T-cell (primary cell): ENCODE measurements at regions of chr1 and their contacts with region 1.

Region 1: GRCh38 chr1:78132174-78132947 is 86.6 kb downstream of the GIPC2 start:
- DNase-seq: no peak
- ATAC-seq: no peak
- H3K4me3 ChIP-seq: no peak overlapping the region
- H3K4me3 Mint-ChIP-seq: no peak overlapping the region
- H3K27ac ChIP-seq: no peak overlapping the region
- H3K27ac Mint-ChIP-seq: no peak overlapping the region
- H3K4me1 ChIP-seq: no peaks in the 10 kb centered on the region
- H3K4me1 Mint-ChIP-seq: no peaks in the 10 kb centered on the region
- H3K27me3 ChIP-seq: no peaks in the 10 kb centered on the region
- H3K27me3 Mint-ChIP-seq: no peaks in the 10 kb centered on the region

Region 2: DNA sequence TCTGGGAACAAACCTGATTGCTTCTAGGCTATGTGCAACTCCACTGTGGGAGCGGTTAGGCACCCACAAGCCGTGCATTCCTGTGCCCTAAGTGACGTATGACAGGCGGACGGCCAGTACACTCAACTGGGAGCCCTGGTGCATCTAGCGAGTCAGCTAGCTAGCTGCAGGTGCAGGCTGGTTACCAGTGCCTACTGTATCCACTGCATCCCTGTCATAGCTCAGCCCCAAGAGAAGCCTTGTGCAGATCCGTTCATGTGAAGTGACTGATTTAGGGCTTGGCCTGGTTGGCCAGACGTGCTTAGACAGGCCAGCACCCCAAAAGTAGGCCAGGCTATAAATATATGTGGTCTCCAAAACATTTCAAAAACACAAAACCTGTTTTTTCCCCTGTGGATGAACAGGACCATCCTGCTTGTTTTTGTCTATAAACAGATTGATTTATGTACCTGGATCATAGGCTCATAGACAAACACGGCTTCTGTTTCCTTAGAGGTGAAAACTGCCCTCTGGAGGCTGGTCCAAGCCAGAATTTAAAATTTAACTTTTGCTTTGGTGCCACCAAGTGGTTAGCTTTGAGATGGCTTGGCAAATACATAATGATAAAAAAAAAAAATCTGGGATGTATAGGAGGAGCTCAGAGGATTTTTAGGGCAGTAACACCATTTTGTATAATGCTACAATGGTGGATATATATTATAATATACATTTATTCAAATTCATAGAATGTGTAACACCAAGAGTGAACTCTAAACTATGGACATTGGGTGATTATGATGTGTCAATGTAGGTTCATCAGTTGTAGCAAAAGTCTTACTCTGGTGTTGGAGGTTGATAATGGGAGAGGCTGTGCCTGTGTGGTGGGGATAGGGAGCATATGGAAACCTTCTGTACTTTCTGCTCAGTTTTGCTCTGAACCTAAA is 18.1 kb before region 1 on chr1:
- CTCF ChIA-PET with region 1: interaction called in 1 of 2 experiments, 11 read pairs
- POLR2A ChIA-PET with region 1: no interaction called
- DNase-seq: peak; percentile 3 to 77 (median 41)
- ATAC-seq: peak; percentile 79 to 90 (median 84)
- H3K4me3 ChIP-seq: no peak overlapping the region
- H3K4me3 Mint-ChIP-seq: no peak overlapping the region
- H3K27ac ChIP-seq: no peak overlapping the region
- H3K27ac Mint-ChIP-seq: no peak overlapping the region
- H3K4me1 ChIP-seq: no peaks in the 10 kb centered on the region
- H3K4me1 Mint-ChIP-seq: no peaks in the 10 kb centered on the region
- H3K27me3 ChIP-seq: no peaks in the 10 kb centered on the region
- H3K27me3 Mint-ChIP-seq: peaks cover 0 to 3% of the 10 kb centered on the region in 2 donors

Region 3: DNA sequence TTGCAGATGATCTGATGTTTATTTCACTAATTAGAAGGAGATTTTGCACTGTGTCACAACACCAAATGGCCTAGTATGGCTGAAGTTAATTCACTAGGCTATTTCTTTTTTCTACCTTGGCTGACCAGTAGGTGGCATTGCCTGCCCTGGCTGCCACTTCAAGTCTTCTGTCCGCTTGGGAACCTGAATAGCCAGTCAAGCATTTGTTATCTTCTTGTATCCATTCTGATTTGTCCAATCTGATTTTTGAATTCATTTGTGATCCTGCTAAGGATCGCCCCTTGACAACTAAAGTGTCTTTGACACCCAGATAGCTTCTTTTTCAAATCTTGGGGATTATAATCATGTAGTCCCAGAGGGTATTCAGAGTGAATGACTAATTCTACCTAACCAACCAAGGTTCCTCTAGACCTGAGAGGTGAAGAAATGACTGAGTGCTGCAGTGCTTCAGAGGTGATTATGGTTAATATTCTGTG is 12.8 kb after region 1 on chr1:
- CTCF ChIA-PET with region 1: interaction called, 8 to 27 read pairs
- POLR2A ChIA-PET with region 1: interaction called in 1 of 2 experiments, 3 read pairs
- DNase-seq: peak in 16 of 35 experiments; percentile 1 to 59 (median 10)
- ATAC-seq: peak; percentile 38 to 63 (median 47)
- H3K4me3 ChIP-seq: no peak overlapping the region
- H3K4me3 Mint-ChIP-seq: no peak overlapping the region
- H3K27ac ChIP-seq: no peak overlapping the region
- H3K27ac Mint-ChIP-seq: no peak overlapping the region
- H3K4me1 ChIP-seq: peaks cover 0 to 5% of the 10 kb centered on the region in 2 experiments
- H3K4me1 Mint-ChIP-seq: peaks cover 17 to 22% (median 21%) of the 10 kb centered on the region in 3 donors
- H3K27me3 ChIP-seq: no peaks in the 10 kb centered on the region
- H3K27me3 Mint-ChIP-seq: peaks cover 9 to 10% of the 10 kb centered on the region in 2 donors

Region 4: DNA sequence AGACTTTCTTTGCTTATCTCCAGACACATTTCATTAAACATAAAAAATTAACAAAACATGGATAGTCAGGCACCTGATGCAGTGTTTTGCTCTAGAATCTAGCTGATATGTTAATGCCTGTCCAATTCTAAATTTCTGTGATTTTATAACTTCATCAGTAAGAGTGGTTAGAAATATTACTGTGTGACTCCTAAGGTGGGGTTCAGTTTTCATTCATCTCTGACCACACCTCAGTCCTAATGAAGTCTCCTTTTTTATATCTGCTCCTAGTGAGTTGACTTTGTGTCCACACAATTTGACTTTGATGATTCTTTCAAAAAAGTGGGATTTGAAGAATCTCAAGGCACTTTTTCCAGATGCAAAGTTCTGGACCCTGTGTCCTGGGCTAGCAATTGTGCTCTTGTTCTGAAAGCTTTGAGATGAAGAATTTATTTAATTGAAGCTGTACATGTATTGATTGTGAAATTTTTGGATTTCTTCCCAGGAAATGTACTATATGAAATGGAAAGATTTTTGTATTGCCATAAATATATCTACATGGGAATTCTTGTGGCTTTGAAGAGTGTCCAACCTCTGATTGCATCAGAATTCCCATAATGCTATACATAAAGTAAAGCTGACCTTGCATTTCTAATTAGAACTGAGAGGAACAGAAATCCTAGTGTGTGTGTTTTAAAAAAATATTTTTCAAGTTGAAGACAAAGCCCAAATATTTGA is 24.6 kb after region 1 on chr1:
- CTCF ChIA-PET with region 1: interaction called in 1 of 2 experiments, 11 read pairs
- POLR2A ChIA-PET with region 1: no interaction called
- DNase-seq: no peak
- ATAC-seq: no peak
- H3K4me3 ChIP-seq: no peak overlapping the region
- H3K4me3 Mint-ChIP-seq: no peak overlapping the region
- H3K27ac ChIP-seq: no peak overlapping the region
- H3K27ac Mint-ChIP-seq: no peak overlapping the region
- H3K4me1 ChIP-seq: no peaks in the 10 kb centered on the region
- H3K4me1 Mint-ChIP-seq: no peaks in the 10 kb centered on the region
- H3K27me3 ChIP-seq: peaks cover 0 to 19% of the 10 kb centered on the region in 2 experiments
- H3K27me3 Mint-ChIP-seq: peaks cover 17 to 24% of the 10 kb centered on the region in 2 donors

Region 5: DNA sequence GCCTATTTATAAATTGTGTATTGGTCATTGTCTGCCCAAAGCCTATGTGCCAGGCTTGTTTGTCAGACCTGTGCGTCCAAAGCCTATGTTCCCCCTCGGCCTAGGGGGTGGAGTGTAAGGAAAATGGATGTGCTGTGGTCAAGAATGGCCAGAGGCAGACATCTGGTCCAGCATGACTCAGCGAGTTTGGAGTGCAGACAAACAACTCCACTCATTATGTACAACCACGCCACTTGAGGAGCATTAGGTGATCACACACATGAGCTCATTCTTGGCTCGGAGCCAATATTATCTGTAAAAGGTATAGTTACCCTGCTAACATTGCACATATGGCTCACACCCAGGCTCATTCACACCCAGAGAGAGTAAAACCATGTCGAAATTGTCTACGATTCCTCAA is 1921.8 kb after region 1 on chr1:
- CTCF ChIA-PET with region 1: no interaction called
- POLR2A ChIA-PET with region 1: no interaction called
- DNase-seq: no peak
- ATAC-seq: no peak
- H3K4me3 ChIP-seq: no peak overlapping the region
- H3K4me3 Mint-ChIP-seq: no peak overlapping the region
- H3K27ac ChIP-seq: no peak overlapping the region
- H3K27ac Mint-ChIP-seq: no peak overlapping the region
- H3K4me1 ChIP-seq: no peaks in the 10 kb centered on the region
- H3K4me1 Mint-ChIP-seq: no peaks in the 10 kb centered on the region
- H3K27me3 ChIP-seq: no peaks in the 10 kb centered on the region
- H3K27me3 Mint-ChIP-seq: no peaks in the 10 kb centered on the region